Calu3 (cell line): ENCODE measurements at regions of chr2 and their contacts with region 1.

Region 1: GRCh38 chr2:17753803-17754663 is at the starts of genes GEN1 and SMC6:
- DNase-seq: peak; percentile 89
- H3K4me3 Mint-ChIP-seq: peak within 1 kb of the TSS; percentile 86
- H3K27ac Mint-ChIP-seq: peak within 1 kb of the TSS; percentile 86
- H3K4me1 Mint-ChIP-seq: peaks cover 18% of the 10 kb centered on the region
- H3K27me3 Mint-ChIP-seq: no peaks in the 10 kb centered on the region
- CTCF ChIP-seq: no peak
- total RNA-seq, gene GEN1: 29.6 and 34.8 TPM in 2 replicates
- total RNA-seq, gene SMC6: 29.6 and 31.6 TPM in 2 replicates

Region 2: GRCh38 chr2:17830053-17831034 is 76.3 kb after region 1 on chr2:
- CTCF ChIA-PET with region 1: interaction called, 4 read pairs
- intact Hi-C with region 1: loop called (anchors 5 kb)
- DNase-seq: peak; percentile 86
- H3K4me3 Mint-ChIP-seq: peak overlapping the region; percentile 53
- H3K27ac Mint-ChIP-seq: no peak overlapping the region
- H3K4me1 Mint-ChIP-seq: peaks cover 7% of the 10 kb centered on the region
- H3K27me3 Mint-ChIP-seq: peaks cover 43% of the 10 kb centered on the region
- CTCF ChIP-seq: peak; percentile 84

Region 3: DNA sequence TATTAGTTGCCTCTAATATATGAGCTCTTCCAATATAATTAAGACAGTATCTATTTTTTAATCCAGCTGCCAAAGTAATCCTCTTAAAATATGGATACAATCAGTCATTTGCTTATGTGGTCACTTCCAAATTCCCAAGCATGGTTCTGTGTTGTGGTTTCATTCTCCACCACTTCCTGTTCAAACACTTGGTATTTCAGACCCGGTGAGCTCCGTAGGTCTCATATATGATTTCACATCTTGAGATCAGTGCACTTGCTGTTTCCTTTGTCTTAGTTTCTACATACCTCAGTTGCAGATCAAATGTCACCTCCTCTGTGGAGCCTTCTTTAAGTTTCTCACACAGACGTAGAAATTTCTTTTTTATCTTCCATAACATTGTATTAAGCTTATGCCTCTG is 378.7 kb after region 1 on chr2:
- CTCF ChIA-PET with region 1: no interaction called
- intact Hi-C with region 1: loop called (anchors 10 kb)
- DNase-seq: no peak
- H3K4me3 Mint-ChIP-seq: no peak overlapping the region
- H3K27ac Mint-ChIP-seq: no peak overlapping the region
- H3K4me1 Mint-ChIP-seq: no peaks in the 10 kb centered on the region
- H3K27me3 Mint-ChIP-seq: peaks cover 21% of the 10 kb centered on the region
- CTCF ChIP-seq: no peak